PC-3 (cell line): ENCODE measurements at regions of chr6 and their contacts with region 1.

Region 1: GRCh38 chr6:71444222-71444621 is 155.6 kb downstream of the OGFRL1 start:
- DNase-seq: peak; percentile 40
- ATAC-seq: peak; percentile 76
- H3K4me3 ChIP-seq: no peak overlapping the region
- H3K27ac ChIP-seq: no peak overlapping the region
- H3K4me1 ChIP-seq: no peaks in the 10 kb centered on the region
- H3K27me3 ChIP-seq: no peaks in the 10 kb centered on the region
- CTCF ChIP-seq: peak; percentile 49

Region 2: GRCh38 chr6:71478834-71479541 is 34.8 kb after region 1 on chr6:
- CTCF ChIA-PET with region 1: no interaction called
- POLR2A ChIA-PET with region 1: interaction called, 3 read pairs
- intact Hi-C with region 1: loop called (anchors 2 kb)
- DNase-seq: peak; percentile 79
- ATAC-seq: peak; percentile 83
- H3K4me3 ChIP-seq: peak overlapping the region; percentile 13; the same call in 1 of the 2 replicates
- H3K27ac ChIP-seq: peak overlapping the region; percentile 66
- H3K4me1 ChIP-seq: peaks cover 25% of the 10 kb centered on the region
- H3K27me3 ChIP-seq: no peaks in the 10 kb centered on the region
- CTCF ChIP-seq: no peak

Region 3: GRCh38 chr6:71510057-71510713 is 66.0 kb after region 1 on chr6:
- CTCF ChIA-PET with region 1: interaction called, 3 read pairs
- POLR2A ChIA-PET with region 1: no interaction called
- intact Hi-C with region 1: loop called (anchors 5 kb)
- DNase-seq: peak; percentile 60
- ATAC-seq: peak; percentile 56
- H3K4me3 ChIP-seq: no peak overlapping the region
- H3K27ac ChIP-seq: no peak overlapping the region
- H3K4me1 ChIP-seq: no peaks in the 10 kb centered on the region
- H3K27me3 ChIP-seq: no peaks in the 10 kb centered on the region
- CTCF ChIP-seq: peak; percentile 68

Region 4: DNA sequence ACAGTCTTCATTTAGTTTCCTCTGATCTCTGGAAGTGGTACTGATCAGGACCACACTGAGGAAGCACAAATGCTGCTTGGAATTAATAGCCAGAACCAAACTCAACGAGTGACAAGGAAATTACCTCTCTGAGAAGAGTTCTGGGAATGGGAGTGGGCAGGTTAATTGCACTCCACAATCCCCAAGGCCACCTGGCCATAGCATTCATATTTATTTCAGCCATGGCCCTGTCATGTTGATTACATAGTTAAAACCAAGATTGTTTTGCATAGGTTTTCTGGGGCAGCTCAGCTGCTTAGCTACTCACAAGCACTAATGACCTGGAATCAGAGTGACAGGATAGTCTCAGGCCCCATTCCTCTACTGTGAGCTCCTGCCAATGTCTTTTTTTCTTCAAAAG is 211.9 kb after region 1 on chr6:
- CTCF ChIA-PET with region 1: no interaction called
- POLR2A ChIA-PET with region 1: no interaction called
- intact Hi-C with region 1: no loop called
- DNase-seq: no peak
- ATAC-seq: no peak
- H3K4me3 ChIP-seq: no peak overlapping the region
- H3K27ac ChIP-seq: no peak overlapping the region
- H3K4me1 ChIP-seq: no peaks in the 10 kb centered on the region
- H3K27me3 ChIP-seq: no peaks in the 10 kb centered on the region
- CTCF ChIP-seq: no peak

Region 5: GRCh38 chr6:72064399-72064975 is 620.3 kb after region 1 on chr6:
- CTCF ChIA-PET with region 1: no interaction called
- POLR2A ChIA-PET with region 1: no interaction called
- intact Hi-C with region 1: no loop called
- DNase-seq: no peak
- ATAC-seq: no peak
- H3K4me3 ChIP-seq: no peak overlapping the region
- H3K27ac ChIP-seq: no peak overlapping the region
- H3K4me1 ChIP-seq: no peaks in the 10 kb centered on the region
- H3K27me3 ChIP-seq: peaks cover 5% of the 10 kb centered on the region; the same call in 1 of the 2 replicates
- CTCF ChIP-seq: no peak

Region 6: GRCh38 chr6:72094506-72094905 is 650.3 kb after region 1 on chr6:
- CTCF ChIA-PET with region 1: no interaction called
- POLR2A ChIA-PET with region 1: no interaction called
- intact Hi-C with region 1: no loop called
- DNase-seq: no peak
- ATAC-seq: no peak
- H3K4me3 ChIP-seq: no peak overlapping the region
- H3K27ac ChIP-seq: no peak overlapping the region
- H3K4me1 ChIP-seq: no peaks in the 10 kb centered on the region
- H3K27me3 ChIP-seq: peaks cover 12% of the 10 kb centered on the region; the same call in 1 of the 2 replicates
- CTCF ChIP-seq: no peak